ENCODE measurements at regions of chr9 and their contacts with region 1.

Region 1: DNA sequence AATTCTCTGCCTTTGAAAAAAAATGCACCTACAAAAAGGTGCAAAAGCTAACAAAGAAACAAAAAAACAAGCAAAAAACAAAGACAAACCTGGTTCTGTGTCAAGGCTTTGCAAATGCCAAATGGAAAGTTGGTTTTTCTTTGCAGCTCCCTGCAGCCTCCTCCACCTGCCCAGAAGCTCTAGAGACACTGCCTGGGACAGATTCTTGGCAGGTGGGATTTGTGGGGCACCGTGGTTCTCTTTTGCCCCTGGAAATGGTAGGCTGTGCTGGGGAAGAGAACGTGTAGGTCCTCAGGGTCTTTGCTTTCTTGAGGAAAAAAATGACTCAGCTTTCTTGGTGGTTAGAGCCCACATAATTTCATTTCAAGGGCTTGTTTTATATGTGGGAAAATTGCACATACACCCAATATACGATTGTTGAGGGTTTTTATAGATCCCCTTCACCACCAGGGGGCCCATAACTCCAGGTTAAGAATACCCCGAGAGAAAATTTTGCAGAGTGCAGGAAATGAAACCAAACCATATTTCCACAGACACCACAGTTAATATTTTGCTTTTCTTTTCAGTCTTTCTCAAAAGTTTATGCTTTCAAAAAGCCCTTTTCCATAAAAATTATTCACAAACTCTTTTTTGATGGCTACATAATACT is 58.7 kb downstream of the NXNL2 start:
- DNase-seq: no peak
- ATAC-seq: no peak

Region 2: GRCh38 chr9:88733651-88734421 is 140.2 kb after region 1 on chr9:
- intact Hi-C with region 1: loop called (anchors 10 kb)
- DNase-seq: peak; percentile 93
- ATAC-seq: peak; percentile 86

Region 3: DNA sequence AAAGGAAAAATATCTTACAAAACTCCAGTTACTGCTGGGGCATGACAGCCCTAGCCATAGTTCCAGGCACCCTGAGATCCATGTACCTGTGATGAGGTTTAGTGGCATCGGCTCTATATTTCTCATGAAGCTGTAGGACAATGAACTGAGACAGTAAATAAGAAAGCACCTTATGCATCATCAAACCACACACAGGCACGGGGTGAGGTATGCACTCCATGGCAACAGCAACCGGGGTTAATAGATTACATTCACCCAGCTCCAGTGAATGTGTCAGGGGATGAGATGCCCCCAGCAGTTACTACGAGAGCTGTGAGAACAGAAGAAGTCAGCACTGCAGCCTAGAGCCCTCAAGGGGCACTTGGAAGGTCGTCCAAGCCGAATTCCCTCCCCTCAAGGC is 235.6 kb after region 1 on chr9:
- intact Hi-C with region 1: no loop called
- DNase-seq: no peak
- ATAC-seq: no peak

Region 4: GRCh38 chr9:89278997-89279739 is 685.5 kb after region 1 on chr9:
- intact Hi-C with region 1: loop called (anchors 5 kb)
- DNase-seq: no peak
- ATAC-seq: no peak

Measured in Right ventricle myocardium inferior (tissue), 1 donor.